PC-3 (cell line): ENCODE measurements at regions of chr21 and their contacts with region 1.

Region 1: DNA sequence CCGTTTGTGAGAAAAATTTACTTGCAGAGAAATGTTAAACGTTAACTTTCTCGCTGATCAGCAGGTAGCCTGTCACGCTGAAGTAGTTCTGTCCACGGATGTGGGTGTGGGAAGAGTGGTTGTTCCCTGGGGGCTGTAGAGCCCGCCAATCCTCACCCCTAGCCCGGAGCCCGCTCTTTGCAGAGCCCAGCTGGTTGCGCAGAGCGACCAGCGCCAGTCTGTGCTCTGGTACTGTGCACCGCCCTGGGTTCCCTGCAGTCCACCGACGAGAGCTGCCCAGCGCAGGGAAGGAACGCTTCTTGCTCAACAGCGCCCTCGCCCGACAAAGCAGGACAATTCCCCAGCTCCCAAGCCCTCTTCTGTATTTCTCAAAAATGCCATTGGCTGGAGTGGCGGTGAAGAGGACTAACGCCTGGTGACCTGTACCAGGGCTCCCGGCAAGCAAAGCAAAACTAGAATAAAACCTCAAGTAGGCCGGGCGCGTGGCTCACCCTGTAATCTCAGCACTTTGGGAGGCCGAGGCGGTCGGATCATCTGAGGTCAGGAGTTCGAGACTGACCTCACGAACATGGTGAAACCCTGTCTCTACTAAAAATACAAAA is 3.3 kb downstream of the RIPPLY3 start:
- DNase-seq: peak; percentile 93
- ATAC-seq: peak; percentile 95
- H3K4me3 ChIP-seq: peak overlapping the region; percentile 76
- H3K27ac ChIP-seq: no peak overlapping the region
- H3K4me1 ChIP-seq: peaks cover 13% of the 10 kb centered on the region; the same call in 1 of the 2 replicates
- H3K27me3 ChIP-seq: no peaks in the 10 kb centered on the region
- CTCF ChIP-seq: peak; percentile 92

Region 2: DNA sequence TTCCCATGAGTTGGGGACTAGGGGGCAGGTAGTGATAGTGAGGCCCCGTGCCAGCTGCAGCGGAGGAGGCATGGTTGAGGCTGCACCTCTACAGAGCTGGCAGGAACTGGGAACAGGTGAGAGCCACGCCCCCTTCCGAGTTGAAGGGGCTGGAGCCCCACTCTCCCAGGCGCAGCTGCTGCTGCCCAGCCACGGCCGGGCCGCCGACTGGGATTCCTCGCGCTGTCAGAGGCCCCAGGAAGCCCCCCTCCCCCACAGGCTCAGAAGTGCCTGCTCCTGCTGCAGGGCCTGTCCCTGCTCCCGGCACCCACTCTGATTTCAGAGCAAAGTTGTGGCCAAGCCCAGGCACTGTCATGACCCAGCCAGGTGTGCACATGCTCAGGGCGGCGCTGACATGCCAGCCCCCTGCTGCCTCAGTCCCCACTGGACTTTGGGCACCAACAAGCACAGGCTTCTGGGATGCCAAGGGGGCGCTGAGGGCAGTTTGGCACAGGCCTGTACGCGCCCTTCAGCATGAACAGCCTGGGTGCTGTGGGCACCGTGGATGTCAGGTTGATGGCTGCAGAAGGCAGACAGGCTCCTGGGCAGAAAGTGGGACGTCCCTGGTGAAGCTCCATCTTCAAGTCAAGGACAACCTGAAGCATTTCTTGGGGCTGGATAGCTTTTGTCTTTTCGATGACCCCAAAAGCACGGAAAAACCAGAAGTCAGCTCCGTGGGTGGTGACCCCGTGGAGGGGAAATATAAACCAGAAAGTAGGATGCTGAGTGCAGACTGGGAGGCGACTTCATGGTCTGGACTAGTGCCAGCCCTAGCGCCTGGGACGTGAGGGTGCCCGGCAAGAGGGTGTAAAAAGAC is 189.4 kb before region 1 on chr21:
- CTCF ChIA-PET with region 1: no interaction called
- POLR2A ChIA-PET with region 1: no interaction called
- intact Hi-C with region 1: no loop called
- DNase-seq: no peak
- ATAC-seq: no peak
- H3K4me3 ChIP-seq: no peak overlapping the region
- H3K27ac ChIP-seq: no peak overlapping the region
- H3K4me1 ChIP-seq: peaks cover 7% of the 10 kb centered on the region; the same call in 1 of the 2 replicates
- H3K27me3 ChIP-seq: no peaks in the 10 kb centered on the region
- CTCF ChIP-seq: no peak

Region 3: DNA sequence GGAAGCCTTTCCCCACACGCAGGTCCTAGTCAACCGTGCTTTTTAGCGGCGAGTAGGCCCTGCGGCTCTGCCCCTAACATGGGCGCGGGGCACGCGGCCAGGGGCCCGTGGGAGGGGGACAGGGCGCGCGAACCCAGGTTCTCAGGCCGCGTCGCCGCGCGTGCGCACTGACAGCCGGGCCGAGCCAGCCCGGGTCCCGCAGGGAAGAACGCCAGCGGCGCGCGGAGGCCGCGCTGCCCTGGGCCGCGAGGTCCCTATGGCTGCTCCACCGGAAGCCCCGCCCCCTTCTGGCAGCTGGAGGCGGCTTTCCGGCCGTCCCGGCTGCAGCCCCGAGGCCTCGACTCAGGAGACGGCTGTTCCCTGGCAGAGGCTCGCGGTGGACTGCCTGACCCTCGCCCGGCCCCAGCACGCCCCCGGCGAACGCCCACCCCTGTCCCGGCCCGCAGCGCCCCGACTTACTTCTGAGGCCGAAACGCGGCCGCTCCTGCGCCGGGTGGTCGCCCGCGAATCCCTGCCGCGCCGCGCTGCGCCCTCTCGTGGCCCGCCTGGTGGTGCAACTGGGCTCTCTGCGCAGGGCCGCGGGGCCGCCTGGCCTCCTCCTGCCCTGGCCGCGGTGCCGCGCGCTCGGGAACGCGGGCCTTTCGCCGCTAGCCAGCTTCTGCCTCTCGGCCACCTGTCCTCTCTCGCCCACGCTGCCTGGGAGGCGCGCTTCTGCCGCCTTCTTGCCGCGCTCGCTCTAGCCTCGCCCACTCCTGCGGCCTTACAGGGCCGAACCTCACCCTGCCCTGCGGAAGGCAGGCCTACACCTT is 19.9 kb before region 1 on chr21:
- CTCF ChIA-PET with region 1: interaction called, 15 read pairs
- POLR2A ChIA-PET with region 1: interaction called, 5 read pairs
- intact Hi-C with region 1: no loop called
- DNase-seq: peak; percentile 95
- ATAC-seq: peak; percentile 77
- H3K4me3 ChIP-seq: peak overlapping the region; percentile 72
- H3K27ac ChIP-seq: peak overlapping the region; percentile 89
- H3K4me1 ChIP-seq: peaks cover 42% of the 10 kb centered on the region
- H3K27me3 ChIP-seq: no peaks in the 10 kb centered on the region
- CTCF ChIP-seq: peak; percentile 83

Region 4: GRCh38 chr21:37087188-37087587 is 77.3 kb after region 1 on chr21:
- CTCF ChIA-PET with region 1: interaction called, 3 read pairs
- POLR2A ChIA-PET with region 1: no interaction called
- intact Hi-C with region 1: loop called (anchors 5 kb)
- DNase-seq: peak; percentile 78
- ATAC-seq: peak; percentile 86
- H3K4me3 ChIP-seq: no peak overlapping the region
- H3K27ac ChIP-seq: no peak overlapping the region
- H3K4me1 ChIP-seq: peaks cover 8% of the 10 kb centered on the region
- H3K27me3 ChIP-seq: no peaks in the 10 kb centered on the region
- CTCF ChIP-seq: peak; percentile 79

Region 5: GRCh38 chr21:37153196-37153934 is 143.5 kb after region 1 on chr21:
- CTCF ChIA-PET with region 1: interaction called, 3 read pairs
- POLR2A ChIA-PET with region 1: no interaction called
- intact Hi-C with region 1: loop called (anchors 1 kb)
- DNase-seq: peak; percentile 94
- ATAC-seq: peak; percentile 59
- H3K4me3 ChIP-seq: peak overlapping the region; percentile 25; the same call in 1 of the 2 replicates
- H3K27ac ChIP-seq: peak overlapping the region; percentile 90
- H3K4me1 ChIP-seq: peaks cover 42% of the 10 kb centered on the region
- H3K27me3 ChIP-seq: no peaks in the 10 kb centered on the region
- CTCF ChIP-seq: no peak